Activated CD4-positive, alpha-beta T cell treated with anti-CD3 and anti-CD28 coated beads for 36 hours (primary cell): ENCODE measurements at regions of chr11 and their contacts with region 1.

Region 1: GRCh38 chr11:116986521-116987105 is 111.6 kb downstream of the SIK3 start:
- DNase-seq: peak; percentile 31
- ATAC-seq: peak; percentile 82
- H3K4me3 Mint-ChIP-seq: peak overlapping the region; percentile 30
- H3K27ac Mint-ChIP-seq: peak overlapping the region; percentile 76
- H3K4me1 Mint-ChIP-seq: peaks cover 71% of the 10 kb centered on the region
- H3K27me3 Mint-ChIP-seq: no peaks in the 10 kb centered on the region

Region 2: DNA sequence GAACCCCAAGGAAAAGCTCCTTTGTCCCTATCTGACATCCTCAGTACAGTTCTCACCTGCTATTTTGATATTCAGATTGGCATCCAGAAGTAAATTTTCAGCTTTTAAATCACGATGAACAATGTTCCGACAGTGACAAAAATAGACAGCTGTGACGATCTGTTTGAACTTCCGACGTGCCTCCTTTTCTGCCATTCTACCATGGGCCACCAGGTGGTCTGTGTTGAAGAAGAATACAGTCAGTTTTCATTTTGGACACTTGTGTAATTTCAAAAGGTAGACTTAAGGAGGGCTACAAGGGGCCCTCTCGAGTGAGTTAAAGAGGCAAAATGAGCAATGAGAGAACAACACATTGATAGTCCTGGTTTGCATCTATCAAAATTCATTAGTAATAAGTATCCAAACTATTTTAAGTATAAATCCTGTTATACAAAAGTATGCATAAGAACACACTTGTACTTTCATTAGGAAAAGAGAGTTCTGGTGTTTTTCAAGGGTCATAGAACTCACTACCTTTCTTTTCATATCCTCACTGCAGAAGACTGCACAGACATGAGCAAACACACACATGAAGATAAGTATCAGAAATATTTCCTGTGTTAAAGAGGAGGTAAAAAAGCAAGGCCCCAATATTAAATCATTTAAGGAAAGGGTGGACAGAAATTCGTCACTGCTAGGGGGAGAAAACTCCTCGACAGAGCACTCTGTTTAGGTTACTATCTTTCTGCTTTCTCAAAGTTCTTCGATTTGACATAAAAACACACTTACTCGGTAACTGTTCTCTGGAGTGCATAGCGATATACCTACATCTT is 59.2 kb before region 1 on chr11:
- CTCF ChIA-PET with region 1: interaction called, 3 read pairs
- POLR2A ChIA-PET with region 1: interaction called, 11 read pairs
- intact Hi-C with region 1: loop called (anchors 1 kb)
- DNase-seq: peak; percentile 72
- ATAC-seq: peak; percentile 33
- H3K4me3 Mint-ChIP-seq: peak overlapping the region; percentile 18
- H3K27ac Mint-ChIP-seq: peak overlapping the region; percentile 49
- H3K4me1 Mint-ChIP-seq: peaks cover 74% of the 10 kb centered on the region
- H3K27me3 Mint-ChIP-seq: no peaks in the 10 kb centered on the region

Region 3: DNA sequence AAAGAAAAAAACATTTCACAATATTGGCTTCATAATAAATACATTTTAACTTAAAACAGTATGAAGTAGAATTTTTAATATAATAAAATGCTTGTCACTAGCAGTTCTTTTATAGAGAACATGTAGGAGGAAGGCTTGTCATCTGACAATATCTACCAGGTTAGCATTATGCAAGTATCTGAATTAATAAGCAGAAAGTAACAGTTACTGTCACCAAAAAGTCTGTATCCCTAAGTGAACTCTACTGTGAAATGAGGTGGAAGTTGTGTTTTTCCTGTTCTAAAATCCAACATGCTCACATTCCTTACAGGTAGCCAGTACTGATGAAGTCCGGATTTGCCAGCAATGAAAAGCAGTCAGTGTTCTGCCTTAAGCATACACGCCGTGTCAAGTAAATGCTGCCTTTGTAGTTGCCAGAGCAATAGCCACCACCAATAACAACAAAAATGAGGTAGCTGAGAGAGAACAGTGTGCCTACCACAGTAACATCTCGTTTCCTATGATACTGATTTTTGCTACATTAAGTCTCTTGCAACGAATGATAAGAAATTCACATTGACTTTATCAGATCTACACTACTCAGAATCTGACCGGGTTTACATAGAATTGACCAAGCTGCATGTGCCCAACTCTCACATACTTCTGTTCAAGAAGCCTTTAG is 16.2 kb after region 1 on chr11:
- CTCF ChIA-PET with region 1: interaction called, 8 read pairs
- POLR2A ChIA-PET with region 1: interaction called, 11 read pairs
- intact Hi-C with region 1: loop called (anchors 1 kb)
- DNase-seq: no peak
- ATAC-seq: peak; percentile 82
- H3K4me3 Mint-ChIP-seq: no peak overlapping the region
- H3K27ac Mint-ChIP-seq: peak overlapping the region; percentile 63
- H3K4me1 Mint-ChIP-seq: peaks cover 69% of the 10 kb centered on the region
- H3K27me3 Mint-ChIP-seq: no peaks in the 10 kb centered on the region

Region 4: DNA sequence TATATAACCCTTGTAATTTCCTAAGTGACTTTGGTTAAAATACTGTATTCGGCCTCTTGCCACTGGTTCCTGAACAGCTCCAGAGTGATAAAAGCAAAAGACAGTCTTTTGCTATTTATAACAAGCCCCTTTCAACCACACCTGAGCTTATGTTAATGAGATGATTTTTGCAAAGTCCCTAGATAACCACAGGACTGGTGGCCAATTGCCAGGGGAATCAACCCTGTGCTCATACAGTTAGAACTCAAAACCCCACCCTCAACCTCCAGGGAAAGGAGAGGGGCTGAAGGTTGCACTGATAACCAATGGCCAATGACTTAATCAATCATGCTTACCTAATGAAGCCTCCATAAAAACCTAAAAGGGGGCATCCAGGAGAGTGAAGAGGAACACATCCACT is 33.7 kb after region 1 on chr11:
- CTCF ChIA-PET with region 1: interaction called, 5 read pairs
- POLR2A ChIA-PET with region 1: interaction called, 14 read pairs
- intact Hi-C with region 1: loop called in 1 of 2 experiments (anchors 1 kb)
- DNase-seq: peak; percentile 62
- ATAC-seq: peak; percentile 14
- H3K4me3 Mint-ChIP-seq: no peak overlapping the region
- H3K27ac Mint-ChIP-seq: no peak overlapping the region
- H3K4me1 Mint-ChIP-seq: peaks cover 60% of the 10 kb centered on the region
- H3K27me3 Mint-ChIP-seq: no peaks in the 10 kb centered on the region

Region 5: GRCh38 chr11:117064275-117064674 is 77.7 kb after region 1 on chr11:
- CTCF ChIA-PET with region 1: interaction called, 3 read pairs
- POLR2A ChIA-PET with region 1: interaction called, 4 read pairs
- intact Hi-C with region 1: loop called (anchors 1 kb)
- DNase-seq: no peak
- ATAC-seq: no peak
- H3K4me3 Mint-ChIP-seq: peak overlapping the region; percentile 26
- H3K27ac Mint-ChIP-seq: peak overlapping the region; percentile 28
- H3K4me1 Mint-ChIP-seq: peaks cover 63% of the 10 kb centered on the region
- H3K27me3 Mint-ChIP-seq: no peaks in the 10 kb centered on the region

Region 6: DNA sequence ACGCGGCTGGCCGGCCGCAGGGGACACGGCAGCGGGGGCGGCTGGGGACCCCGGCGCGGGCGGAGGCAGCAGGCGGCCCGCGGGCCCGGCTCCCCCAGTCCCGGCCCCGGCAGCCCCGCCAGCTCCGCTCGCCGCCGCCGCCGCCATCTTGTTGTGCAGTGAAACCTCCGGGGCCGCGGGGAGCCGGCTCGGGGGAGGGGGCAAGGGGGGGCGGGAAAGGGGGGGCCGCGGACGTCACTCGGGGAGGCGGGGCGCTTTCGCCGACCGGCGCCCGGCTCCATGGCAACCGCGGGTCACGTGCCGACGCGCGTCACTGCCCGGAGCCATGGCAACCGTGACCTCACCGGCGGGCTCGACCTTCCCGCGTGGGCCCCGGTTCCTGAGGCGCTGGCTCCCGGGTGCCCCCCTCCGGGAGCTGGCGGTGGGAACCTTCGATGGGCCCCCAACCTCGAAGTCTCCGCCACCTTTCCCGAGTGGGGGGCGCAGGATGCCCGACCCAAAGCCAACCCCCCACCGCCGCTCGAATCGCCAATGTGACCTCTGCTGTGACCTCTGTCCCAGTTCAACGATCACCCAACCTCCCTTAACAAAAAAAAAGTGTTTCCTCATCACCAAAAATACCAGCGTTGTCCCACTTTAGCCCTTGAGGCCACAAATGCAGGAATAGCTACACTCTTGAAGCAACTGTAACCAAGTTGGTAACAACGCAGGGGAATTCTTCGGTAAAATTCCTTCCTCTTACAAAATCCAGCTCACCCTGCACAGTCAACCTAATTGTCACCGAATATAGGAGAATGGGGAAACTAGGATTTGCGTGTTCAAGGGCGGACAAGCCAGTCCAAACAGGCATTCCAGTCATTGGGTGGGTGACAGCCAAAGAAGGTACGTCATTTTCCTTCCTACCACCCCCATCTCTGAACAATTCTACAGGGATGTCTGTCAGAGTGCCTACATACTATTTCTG is 111.9 kb after region 1 on chr11 and contains the start of gene SIK3:
- CTCF ChIA-PET with region 1: interaction called, 3 read pairs
- POLR2A ChIA-PET with region 1: interaction called, 6 read pairs
- intact Hi-C with region 1: loop called in 1 of 2 experiments (anchors 1 kb)
- DNase-seq: peak; percentile 96
- ATAC-seq: peak; percentile 71
- H3K4me3 Mint-ChIP-seq: peak within 1 kb of the TSS; percentile 93
- H3K27ac Mint-ChIP-seq: peak within 1 kb of the TSS; percentile 93
- H3K4me1 Mint-ChIP-seq: peaks cover 46% of the 10 kb centered on the region
- H3K27me3 Mint-ChIP-seq: no peaks in the 10 kb centered on the region
- total RNA-seq, gene SIK3: 23.6 to 25.3 TPM